ENCODE measurements at regions of chr2 and their contacts with region 1.

Region 1: DNA sequence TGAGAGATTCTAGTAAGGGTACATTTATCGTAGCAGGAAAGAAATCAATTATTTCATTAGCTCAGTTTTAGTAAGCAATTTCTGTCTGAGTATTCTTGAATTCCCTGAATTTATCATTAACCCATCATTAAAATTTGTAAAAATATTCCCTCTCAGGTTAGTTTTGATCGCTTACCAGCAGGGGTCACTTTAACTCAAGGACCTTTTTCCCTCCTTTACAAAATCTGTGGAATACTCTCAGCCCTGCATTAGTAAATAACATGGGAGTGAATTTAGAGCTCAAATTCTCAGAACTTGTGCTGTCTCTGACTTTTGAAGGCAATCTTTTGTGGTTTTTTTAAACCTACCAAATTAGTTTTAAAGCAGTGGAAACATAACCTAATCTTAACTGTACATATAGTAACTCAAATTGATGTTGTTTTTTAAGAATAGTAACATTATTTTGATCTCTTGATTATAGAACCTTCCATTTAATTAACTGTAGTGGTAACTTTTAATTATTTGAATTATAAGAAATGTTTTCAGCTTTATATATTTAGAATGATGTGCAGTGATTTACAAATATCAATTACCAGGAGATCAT is 97.2 kb downstream of the AGPS start:
- DNase-seq: no peak

Region 2: DNA sequence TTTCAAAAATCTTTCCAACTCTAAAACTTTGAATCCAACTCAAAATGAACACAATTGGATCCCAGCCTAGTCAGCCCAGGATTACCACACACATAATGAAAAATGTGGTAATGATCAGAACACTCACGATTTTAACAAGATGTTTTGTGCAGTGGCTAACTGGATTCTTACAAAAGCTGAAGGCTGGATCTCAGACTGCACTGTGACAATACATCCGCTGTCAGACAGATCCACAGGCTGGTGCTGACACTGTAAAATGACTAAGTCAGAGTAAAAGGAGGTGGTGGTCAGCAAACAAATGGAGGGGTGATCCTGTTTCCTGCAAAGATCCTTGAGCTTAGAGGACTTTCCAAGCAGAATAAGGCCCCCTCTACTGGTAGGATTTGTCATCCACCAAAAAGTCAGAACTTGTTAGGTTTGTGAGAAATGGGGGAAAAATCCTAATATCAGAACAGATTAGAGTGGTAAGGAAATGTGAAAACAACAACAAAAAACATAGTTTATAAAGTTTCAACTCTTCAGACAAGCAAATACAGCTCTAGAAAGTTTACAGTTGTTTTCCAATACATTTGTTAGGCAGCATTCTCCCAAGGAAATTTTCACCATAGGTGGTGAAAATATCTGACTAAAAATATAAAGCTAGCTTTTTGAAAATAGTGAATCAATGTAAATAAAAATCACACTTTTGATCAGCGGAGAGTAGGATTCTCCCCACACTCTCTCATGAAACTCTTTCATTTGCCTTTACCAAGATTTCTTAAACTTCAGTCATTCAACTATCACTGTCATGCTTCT is 114.7 kb after region 1 on chr2:
- intact Hi-C with region 1: loop called (anchors 5 kb)
- DNase-seq: no peak

Region 3: DNA sequence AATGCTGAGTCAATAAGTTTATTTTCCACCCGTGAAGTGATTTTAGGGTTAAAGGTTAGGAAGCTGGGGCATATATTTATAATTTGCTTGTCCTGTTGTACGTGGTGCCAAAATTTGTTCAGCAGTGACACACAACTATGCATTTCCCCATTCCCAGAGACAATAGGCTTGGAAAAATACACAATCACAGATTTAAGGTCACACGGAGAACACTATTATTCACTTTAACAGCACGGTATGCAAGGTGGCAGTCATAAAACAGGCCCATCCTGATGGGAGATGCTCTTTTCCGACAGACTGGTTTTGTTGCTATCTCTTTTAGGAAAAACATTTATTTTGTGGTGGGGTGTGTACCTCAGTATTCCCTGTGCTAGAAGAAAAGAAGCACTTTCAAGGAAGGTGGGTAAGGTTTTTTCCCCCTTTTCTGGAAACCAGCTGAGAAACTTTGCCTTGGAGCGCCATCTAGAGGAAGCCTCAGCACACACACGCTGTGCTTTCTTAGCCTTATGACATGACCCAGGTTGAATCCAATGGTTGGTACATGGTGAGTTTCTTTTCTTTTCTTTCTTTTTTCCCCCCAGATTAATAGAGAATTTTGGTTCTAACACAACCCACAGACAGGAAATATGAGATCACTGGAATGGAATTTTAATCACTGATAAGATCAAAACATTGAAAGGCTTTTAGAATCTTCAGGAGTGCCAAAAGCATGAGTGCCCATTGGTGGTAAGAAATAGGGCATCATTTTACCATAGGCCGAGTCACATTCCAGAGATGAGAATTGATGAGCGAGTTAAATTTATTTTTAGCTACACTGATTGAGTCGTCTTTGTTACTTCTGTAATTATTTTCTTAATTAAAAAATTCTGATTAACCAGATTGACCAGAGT is 234.8 kb after region 1 on chr2:
- intact Hi-C with region 1: loop called (anchors 2 kb)
- DNase-seq: no peak

Region 4: GRCh38 chr2:177763532-177764265 is 273.9 kb after region 1 on chr2:
- intact Hi-C with region 1: loop called (anchors 10 kb)
- DNase-seq: no peak